Naive thymus-derived CD4-positive, alpha-beta T cell (primary cell): ENCODE measurements at regions of chr1 and their contacts with region 1.

Region 1: DNA sequence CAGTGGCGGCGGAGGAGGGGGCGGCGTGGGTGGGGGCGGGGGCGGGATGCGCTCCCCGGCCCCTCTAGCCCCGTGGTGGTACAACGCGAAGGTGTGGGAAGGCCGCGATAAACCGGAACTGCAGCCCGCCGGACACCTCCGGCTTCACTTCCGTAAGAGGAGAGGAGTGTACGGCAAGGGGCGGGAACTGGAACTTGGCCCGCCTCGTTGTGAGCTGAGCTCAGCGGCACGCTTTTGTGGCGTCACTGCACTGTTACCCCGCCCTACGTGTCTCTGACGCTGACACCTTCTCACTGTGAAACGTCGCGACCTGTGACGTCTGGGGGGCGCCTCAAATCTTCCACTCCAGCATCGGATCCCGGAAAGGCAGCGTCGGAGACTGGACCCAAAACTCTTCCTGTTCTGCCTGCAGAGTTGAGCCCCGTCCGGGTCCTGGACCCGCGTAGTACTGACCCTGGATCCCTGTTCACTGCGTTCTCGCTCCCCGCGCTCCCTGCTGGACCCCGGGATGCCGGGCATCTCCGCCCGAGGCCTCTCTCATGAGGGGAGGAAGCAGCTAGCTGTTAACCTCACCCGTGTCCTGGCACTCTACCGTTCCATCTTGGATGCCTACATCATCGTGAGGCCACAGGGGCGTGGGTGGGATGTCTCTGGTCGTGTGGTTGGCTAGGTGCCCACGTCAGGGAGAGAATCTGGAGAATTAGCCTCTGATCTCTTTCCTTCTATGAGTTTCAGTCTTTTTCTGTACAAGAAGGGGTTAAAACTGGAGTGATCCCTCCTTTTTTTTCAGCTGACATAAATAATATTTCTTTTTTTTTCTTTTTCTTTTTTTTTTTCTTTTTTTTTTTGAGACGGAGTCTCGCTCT is at the start of gene ISG20L2:
- DNase-seq: peak; percentile 76 to 98 (median 94)
- ATAC-seq: peak; percentile 96
- H3K4me3 ChIP-seq: peak within 1 kb of the TSS; percentile 97
- H3K4me3 Mint-ChIP-seq: no peak within 1 kb of the TSS
- H3K27ac ChIP-seq: peak within 1 kb of the TSS; percentile 95
- H3K27ac Mint-ChIP-seq: peak within 1 kb of the TSS in 4 of 9 donors; percentile 94 to 99 (median 98)
- H3K4me1 ChIP-seq: peaks cover 38 to 40% of the 10 kb centered on the region in 2 donors
- H3K4me1 Mint-ChIP-seq: peaks cover 18 to 35% (median 22%) of the 10 kb centered on the region in 7 donors
- H3K27me3 ChIP-seq: no peaks in the 10 kb centered on the region
- H3K27me3 Mint-ChIP-seq: no peaks in the 10 kb centered on the region
- total RNA-seq, gene ISG20L2: 44.7 to 59.9 (median 53.9) TPM

Region 2: DNA sequence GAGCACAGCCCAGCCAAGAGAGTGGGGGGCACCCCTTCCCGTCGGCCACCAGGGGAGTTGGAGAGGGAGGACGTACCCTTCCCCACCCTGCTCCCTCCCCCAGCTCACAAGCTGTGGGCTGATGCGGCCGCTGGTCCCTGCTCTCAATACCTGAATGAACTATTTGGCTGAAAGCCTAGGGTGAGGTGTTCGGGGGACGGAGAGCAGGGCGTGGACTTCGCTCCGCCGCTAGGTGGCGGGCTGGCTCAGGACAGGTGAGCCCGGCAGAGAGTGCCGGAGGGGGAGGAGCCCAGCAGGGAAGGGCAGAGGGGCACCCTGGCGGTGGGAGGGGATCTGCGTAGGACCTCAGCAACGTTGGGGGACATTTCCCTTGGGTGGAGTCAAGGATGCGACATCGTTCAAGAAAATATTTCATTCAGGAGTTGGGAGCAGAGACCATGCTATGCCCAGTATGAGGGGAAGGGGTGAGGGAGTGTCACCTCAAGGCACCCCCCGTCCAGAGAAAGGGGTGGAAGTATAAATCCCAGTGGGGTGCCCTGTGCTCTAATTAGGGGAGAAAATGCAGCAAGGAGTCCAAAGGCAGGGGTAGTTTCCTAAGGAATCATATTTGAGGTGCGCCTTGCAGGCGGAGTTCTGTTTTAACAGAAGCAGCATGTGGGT is 371.8 kb before region 1 on chr1:
- CTCF ChIA-PET with region 1: no interaction called
- POLR2A ChIA-PET with region 1: no interaction called
- intact Hi-C with region 1: no loop called
- DNase-seq: peak; percentile 27 to 78 (median 54)
- ATAC-seq: peak; percentile 97
- H3K4me3 ChIP-seq: no peak overlapping the region
- H3K4me3 Mint-ChIP-seq: peak overlapping the region in 6 of 10 donors; percentile 2 to 21 (median 11)
- H3K27ac ChIP-seq: no peak overlapping the region
- H3K27ac Mint-ChIP-seq: no peak overlapping the region
- H3K4me1 ChIP-seq: no peaks in the 10 kb centered on the region
- H3K4me1 Mint-ChIP-seq: peaks cover 0 to 11% (median 4%) of the 10 kb centered on the region in 7 donors
- H3K27me3 ChIP-seq: no peaks in the 10 kb centered on the region
- H3K27me3 Mint-ChIP-seq: peaks cover 8 to 47% (median 18%) of the 10 kb centered on the region in 5 donors

Region 3: GRCh38 chr1:156659994-156660751 is 68.7 kb before region 1 on chr1:
- CTCF ChIA-PET with region 1: interaction called, 17 read pairs
- POLR2A ChIA-PET with region 1: interaction called, 3 read pairs
- intact Hi-C with region 1: loop called (anchors 1 kb)
- DNase-seq: peak; percentile 82 to 96 (median 89)
- ATAC-seq: peak; percentile 95
- H3K4me3 ChIP-seq: no peak overlapping the region
- H3K4me3 Mint-ChIP-seq: peak overlapping the region in 9 of 10 donors; percentile 4 to 90 (median 48)
- H3K27ac ChIP-seq: no peak overlapping the region
- H3K27ac Mint-ChIP-seq: peak overlapping the region in 8 of 9 donors; percentile 53 to 87 (median 69)
- H3K4me1 ChIP-seq: peaks cover 32 to 39% of the 10 kb centered on the region in 2 donors
- H3K4me1 Mint-ChIP-seq: peaks cover 33 to 62% (median 44%) of the 10 kb centered on the region in 7 donors
- H3K27me3 ChIP-seq: peaks cover 0 to 13% of the 10 kb centered on the region in 2 donors
- H3K27me3 Mint-ChIP-seq: peaks cover 18 to 30% (median 24%) of the 10 kb centered on the region in 5 donors

Region 4: DNA sequence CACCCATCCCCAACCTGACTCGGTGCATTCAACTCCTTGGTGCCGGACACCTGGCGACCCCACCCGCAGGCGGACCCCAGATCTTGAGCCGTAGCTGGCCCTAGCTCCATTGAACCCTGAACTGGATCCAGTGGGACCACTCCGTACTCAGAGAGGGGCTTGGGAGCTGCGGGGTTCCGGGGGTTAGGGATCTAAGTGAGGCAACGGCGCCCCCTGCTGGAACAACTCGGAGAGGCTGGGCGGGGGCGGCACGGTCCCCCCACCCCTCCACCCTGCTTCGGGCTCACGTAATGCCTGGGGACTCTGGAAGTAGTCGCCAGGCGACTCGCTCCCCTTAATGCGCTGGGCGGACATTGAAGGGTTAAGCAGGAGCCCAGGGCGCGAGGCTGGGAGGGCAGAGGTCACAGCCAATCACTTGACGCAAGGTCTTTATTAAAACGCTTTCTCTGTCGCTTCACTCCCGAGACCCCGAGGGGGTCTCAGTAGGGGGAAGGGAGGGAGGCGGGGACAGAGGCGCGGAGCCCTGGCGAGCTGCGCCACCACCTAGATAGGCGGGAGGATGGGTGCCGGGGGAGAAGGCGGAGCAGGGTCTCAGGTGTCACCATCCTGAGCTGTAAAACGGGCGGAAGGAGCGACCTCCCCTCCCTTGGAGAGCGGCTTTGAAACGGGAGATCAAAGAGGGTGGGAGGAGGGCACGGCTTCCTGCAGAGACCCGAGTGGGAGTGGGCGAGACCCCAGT is 22.7 kb before region 1 on chr1:
- CTCF ChIA-PET with region 1: interaction called, 37 read pairs
- POLR2A ChIA-PET with region 1: interaction called, 7 read pairs
- intact Hi-C with region 1: loop called (anchors 1 to 2 kb)
- DNase-seq: peak; percentile 59 to 79 (median 68)
- ATAC-seq: peak; percentile 82
- H3K4me3 ChIP-seq: peak overlapping the region; percentile 81
- H3K4me3 Mint-ChIP-seq: peak overlapping the region; percentile 88 to 95 (median 92)
- H3K27ac ChIP-seq: peak overlapping the region; percentile 71
- H3K27ac Mint-ChIP-seq: peak overlapping the region; percentile 46 to 94 (median 92)
- H3K4me1 ChIP-seq: peaks cover 23 to 27% of the 10 kb centered on the region in 2 donors
- H3K4me1 Mint-ChIP-seq: peaks cover 11 to 37% (median 21%) of the 10 kb centered on the region in 7 donors
- H3K27me3 ChIP-seq: peaks cover 3 to 4% of the 10 kb centered on the region in 2 donors
- H3K27me3 Mint-ChIP-seq: peaks cover 8 to 44% (median 24%) of the 10 kb centered on the region in 5 donors

Region 5: DNA sequence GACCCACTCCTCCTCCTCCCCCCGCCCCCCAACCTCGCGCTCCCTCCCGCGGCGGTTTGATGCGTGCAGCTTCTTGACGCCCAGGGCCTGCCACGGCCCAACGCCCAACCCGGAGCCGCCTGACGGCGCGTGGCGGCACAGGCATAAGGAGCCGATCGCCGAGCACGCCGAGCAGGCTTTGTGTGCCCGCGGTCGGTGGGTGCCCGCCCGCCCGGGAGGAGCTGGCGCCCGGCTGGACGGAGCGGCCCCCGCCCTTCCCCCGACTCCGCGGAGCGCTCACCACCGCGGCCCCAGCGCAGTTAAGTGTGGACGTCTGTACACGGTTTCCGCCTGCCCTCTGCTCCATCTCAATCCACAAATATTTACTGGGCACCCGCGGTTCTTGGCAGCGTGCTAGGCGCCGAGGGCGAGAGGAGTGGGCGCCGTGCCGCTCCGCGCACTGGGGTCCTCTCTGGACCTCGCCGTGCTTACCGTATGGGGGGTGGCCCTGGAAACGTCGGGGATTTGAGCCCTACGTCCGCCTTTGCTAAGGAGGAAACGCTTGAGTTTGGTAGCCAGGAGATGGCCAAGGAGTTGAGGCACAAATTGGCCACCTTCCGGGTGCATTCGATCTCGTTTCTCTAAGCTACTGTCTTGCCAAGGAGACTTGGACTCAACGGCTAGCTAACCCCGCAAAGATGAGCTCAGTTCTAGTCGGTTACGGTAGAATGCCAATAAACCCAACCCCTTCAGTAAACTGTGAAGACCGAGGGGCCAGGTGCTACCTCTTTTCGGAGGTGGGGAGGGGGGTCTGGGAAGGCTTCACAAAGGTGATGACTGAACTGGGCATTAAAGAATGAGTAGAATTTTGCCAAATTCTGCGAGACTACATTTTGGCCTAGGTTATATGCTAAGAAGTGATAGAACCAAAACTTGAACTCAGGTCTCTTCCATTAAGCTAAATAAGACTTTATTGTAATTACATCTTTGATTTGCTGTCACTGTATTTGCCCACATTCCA is 23.2 kb after region 1 on chr1:
- CTCF ChIA-PET with region 1: interaction called, 7 read pairs
- POLR2A ChIA-PET with region 1: interaction called, 24 read pairs
- intact Hi-C with region 1: loop called (anchors 1 kb)
- DNase-seq: peak; percentile 83 to 98 (median 92)
- ATAC-seq: peak; percentile 96
- H3K4me3 ChIP-seq: peak overlapping the region; percentile 93
- H3K4me3 Mint-ChIP-seq: peak overlapping the region; percentile 88 to 98 (median 92)
- H3K27ac ChIP-seq: peak overlapping the region; percentile 90
- H3K27ac Mint-ChIP-seq: peak overlapping the region; percentile 82 to 96 (median 90)
- H3K4me1 ChIP-seq: peaks cover 36 to 38% of the 10 kb centered on the region in 2 donors
- H3K4me1 Mint-ChIP-seq: peaks cover 38 to 57% (median 45%) of the 10 kb centered on the region in 7 donors
- H3K27me3 ChIP-seq: no peaks in the 10 kb centered on the region
- H3K27me3 Mint-ChIP-seq: no peaks in the 10 kb centered on the region

Region 6: DNA sequence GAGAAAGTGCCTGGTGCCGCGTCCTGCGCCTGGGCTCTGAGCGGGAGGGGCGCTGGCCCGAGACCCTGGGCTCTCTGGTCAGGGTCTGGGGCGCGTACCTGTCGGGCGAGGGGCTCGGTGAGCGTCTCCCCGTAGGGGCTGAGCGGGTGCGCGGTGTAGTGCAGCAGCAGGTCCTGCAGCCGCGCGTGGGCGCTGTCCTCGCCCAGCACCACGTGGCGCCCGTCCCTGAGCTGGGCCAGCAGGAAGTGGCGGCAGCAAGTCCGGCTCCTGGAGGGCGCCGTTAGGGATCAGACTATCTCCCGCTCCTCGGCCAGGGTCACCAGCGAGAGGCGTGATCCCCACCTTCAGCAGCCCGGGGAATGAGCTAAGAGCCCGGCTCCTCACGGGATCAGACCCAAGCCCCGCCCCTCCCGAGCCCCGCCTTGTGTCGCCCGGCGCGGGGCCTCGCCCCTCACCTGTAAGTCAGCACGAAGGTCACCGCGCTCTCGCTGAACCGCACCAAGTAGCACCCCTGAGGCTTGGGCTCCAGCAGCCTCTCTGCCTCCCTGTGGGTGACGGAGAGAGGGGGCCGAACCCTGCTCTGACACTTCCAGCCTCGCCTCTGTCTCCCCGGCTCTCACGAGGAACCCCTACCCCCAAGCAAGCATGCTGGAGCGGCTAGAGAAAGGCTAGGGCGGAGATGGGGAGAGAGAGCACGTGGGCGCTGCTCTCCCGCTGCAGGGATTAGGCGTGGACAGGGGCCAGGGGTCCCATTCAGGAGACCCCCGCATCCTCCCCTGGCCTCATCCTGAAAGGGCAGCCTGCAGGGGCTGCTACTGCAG is 85.1 kb after region 1 on chr1:
- CTCF ChIA-PET with region 1: interaction called, 3 read pairs
- POLR2A ChIA-PET with region 1: no interaction called
- intact Hi-C with region 1: loop called (anchors 1 kb)
- DNase-seq: peak; percentile 54 to 79 (median 70)
- ATAC-seq: peak; percentile 45
- H3K4me3 ChIP-seq: peak overlapping the region; percentile 83
- H3K4me3 Mint-ChIP-seq: peak overlapping the region; percentile 82 to 97 (median 84)
- H3K27ac ChIP-seq: peak overlapping the region; percentile 98
- H3K27ac Mint-ChIP-seq: peak overlapping the region; percentile 90 to 100 (median 99)
- H3K4me1 ChIP-seq: peaks cover 33 to 59% of the 10 kb centered on the region in 2 donors
- H3K4me1 Mint-ChIP-seq: peaks cover 45 to 76% (median 60%) of the 10 kb centered on the region in 7 donors
- H3K27me3 ChIP-seq: no peaks in the 10 kb centered on the region
- H3K27me3 Mint-ChIP-seq: no peaks in the 10 kb centered on the region

Region 7: DNA sequence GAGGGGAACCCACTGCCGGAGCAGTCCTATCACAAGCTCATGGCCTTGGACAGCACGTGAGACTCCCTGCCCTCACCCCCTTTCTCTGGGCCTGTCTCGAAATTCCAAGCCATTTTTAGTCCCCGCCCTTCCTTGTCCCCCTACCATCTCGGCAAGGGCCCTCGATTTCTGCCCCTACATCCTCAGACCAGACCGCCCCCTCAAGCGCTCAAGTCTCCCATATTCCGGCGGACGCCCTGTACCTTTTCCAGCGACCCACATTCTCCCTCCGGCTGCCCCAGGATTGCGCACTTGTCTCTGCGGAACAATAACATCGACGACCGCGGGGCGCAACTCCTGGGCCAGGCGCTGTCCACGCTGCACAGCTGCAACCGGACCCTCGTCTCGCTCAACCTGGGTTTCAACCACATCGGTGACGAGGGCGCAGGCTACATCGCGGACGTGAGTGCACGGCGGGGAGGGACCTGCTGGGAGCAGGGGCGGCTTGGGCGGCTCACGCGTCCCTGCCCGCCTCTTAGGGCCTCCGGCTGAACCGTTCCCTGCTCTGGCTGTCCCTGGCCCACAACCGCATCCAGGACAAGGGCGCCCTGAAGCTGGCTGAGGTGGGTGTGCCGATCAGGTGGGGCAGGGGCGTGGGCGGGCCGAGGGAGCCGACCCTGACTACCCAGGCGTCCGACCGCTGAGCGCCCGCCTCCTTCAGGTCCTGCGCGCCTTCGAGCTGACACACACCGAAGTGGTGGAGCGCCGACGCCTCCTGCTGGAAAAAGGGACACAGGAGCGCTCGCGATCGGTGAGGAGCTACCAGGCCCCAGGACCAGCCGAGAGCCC is 198.6 kb after region 1 on chr1:
- CTCF ChIA-PET with region 1: interaction called, 6 read pairs
- POLR2A ChIA-PET with region 1: no interaction called
- intact Hi-C with region 1: loop called (anchors 1 to 5 kb)
- DNase-seq: peak; percentile 42 to 72 (median 59)
- ATAC-seq: peak; percentile 76
- H3K4me3 ChIP-seq: no peak overlapping the region
- H3K4me3 Mint-ChIP-seq: peak overlapping the region; percentile 13 to 83 (median 65)
- H3K27ac ChIP-seq: no peak overlapping the region
- H3K27ac Mint-ChIP-seq: peak overlapping the region in 2 of 9 donors; percentile 29 to 59
- H3K4me1 ChIP-seq: peaks cover 0 to 8% of the 10 kb centered on the region in 2 donors
- H3K4me1 Mint-ChIP-seq: peaks cover 18 to 35% (median 31%) of the 10 kb centered on the region in 7 donors
- H3K27me3 ChIP-seq: peaks cover 16 to 27% of the 10 kb centered on the region in 2 donors
- H3K27me3 Mint-ChIP-seq: peaks cover 72 to 91% (median 81%) of the 10 kb centered on the region in 5 donors